Right ventricle myocardium inferior (tissue), 1 donor: ENCODE measurements at regions of chr15 and their contacts with region 1.

Region 1: DNA sequence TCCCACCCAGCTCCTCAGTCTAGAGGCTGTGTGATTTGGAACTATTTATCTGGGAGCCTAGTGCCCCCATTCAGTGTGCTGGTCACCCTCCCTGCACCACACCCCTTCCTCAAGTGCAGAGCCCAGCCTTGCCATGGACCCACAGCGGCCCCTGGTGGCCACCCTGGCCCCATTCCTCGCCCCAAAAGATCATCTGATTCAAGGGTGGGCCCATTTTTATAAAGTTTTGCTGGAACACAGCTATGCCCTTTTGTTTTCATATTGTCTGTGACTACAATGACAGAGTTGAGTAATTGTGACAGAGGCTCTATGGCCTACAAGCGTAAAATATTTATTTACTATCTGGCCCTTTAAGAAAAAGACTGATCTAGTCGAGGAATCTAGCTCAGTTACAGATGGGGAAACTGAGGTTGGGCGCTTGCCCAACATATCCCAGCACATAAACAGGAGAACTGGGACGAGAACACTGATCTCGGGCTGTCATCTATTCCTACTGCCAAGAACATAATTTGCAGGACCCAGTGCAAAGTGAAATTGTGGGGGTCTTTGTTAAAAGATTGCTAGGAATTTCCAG is 1.8 kb downstream of the FES start:
- DNase-seq: peak; percentile 90
- ATAC-seq: peak; percentile 62

Region 2: DNA sequence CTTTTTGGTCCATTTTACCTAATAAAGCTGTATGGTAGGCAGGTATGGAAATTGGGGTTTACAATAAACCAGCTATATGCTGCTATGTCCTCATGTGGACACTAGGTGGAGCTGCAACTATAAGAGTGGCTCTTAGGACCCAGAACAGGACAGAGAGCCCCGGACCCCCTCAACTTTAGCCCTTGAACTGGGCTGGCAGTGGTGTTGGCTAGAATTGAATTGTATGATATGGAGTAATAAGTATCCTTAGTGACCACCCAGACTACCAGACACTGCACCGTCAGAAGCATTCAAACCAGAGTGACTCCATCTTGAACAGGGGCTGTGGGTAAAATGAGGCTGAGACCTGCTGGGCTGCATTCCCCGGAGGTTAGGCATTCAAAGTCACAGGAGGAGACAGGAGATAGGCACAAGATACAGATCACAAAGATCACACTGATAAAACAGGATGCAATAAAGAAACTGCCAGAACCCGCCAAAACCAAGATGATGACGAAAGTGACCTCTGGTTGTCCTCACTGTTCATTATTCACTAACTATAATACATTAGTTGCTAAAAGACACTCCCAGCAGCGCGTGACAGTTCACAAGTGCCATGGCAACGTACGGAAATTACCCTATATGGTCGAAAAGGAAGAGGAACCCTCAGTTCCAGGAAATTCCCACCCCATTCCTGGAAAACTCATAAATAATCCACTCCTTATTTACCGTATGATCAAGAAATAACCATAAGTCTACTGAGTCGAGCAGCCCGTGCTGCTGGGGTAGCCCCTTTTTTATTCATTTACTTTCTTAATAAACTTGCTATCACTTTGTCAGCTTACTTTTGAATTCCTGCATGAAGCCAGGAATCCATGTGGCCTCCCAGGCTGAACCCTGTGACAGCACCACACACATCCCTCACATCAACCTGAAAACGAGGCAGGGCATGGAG is 237.7 kb before region 1 on chr15:
- intact Hi-C with region 1: loop called (anchors 1 kb)
- DNase-seq: peak; percentile 85
- ATAC-seq: peak; percentile 81

Region 3: GRCh38 chr15:90716976-90717821 is 168.9 kb before region 1 on chr15 and contains the start of gene BLM:
- intact Hi-C with region 1: loop called (anchors 1 kb)
- DNase-seq: peak; percentile 96
- ATAC-seq: peak; percentile 100
- total RNA-seq, gene BLM: 26.6 TPM

Region 4: GRCh38 chr15:90869601-90870353 is 16.4 kb before region 1 on chr15:
- intact Hi-C with region 1: loop called (anchors 2 kb)
- DNase-seq: peak; percentile 87
- ATAC-seq: peak; percentile 84